Heart right ventricle (tissue), 16 donors: ENCODE measurements at regions of chr11 and their contacts with region 1.

Region 1: DNA sequence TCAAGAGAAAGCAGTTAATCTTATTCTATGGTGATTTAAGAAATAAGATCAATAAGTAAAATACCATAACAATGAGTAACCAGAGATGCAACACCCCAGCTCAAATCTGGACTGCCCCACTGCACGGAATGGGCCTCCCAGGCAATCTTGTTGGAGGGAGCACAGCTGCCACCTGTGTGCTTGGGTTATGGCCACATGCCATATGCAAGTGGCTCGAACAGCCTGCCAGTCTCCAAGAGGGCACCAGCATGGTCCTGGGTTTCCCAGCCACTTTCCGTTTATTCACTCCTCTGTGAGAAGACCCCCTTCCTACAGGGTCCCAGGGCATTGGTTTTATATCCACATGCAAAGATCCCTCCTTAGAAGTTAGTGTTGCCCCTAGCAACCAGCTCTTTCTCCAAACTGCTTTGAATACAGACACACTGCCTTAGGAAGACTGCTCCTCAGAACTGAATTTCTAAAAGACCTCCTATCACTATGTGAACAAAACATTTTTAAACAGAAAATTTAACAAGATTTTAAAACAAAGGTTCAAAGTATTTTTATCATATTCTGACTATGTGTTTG is 487.8 kb downstream of the BUD13 start:
- DNase-seq: no peak
- ATAC-seq: peak in 1 of 8 donors; percentile 42
- H3K4me3 ChIP-seq: no peak overlapping the region
- H3K27ac ChIP-seq: no peak overlapping the region
- H3K4me1 ChIP-seq: no peaks in the 10 kb centered on the region
- H3K27me3 ChIP-seq: no peaks in the 10 kb centered on the region
- CTCF ChIP-seq: no peak

Region 2: GRCh38 chr11:117072517-117073461 is 787.8 kb after region 1 on chr11:
- intact Hi-C with region 1: loop called in 1 of 10 experiments (anchors 5 kb)
- DNase-seq: no peak
- ATAC-seq: peak in 5 of 8 donors; percentile 35 to 84 (median 42)
- H3K4me3 ChIP-seq: no peak overlapping the region
- H3K27ac ChIP-seq: peak overlapping the region in 2 of 10 donors; percentile 39 to 58
- H3K4me1 ChIP-seq: peaks cover 10 to 95% (median 59%) of the 10 kb centered on the region in 9 donors
- H3K27me3 ChIP-seq: no peaks in the 10 kb centered on the region
- CTCF ChIP-seq: no peak